Activated T-helper 1 cell treated with anti-CD3 and anti-CD28 coated beads, Interleukin-12 subunit alpha, Interleukin-12 subunit beta, Interleukin-2, Interleukin-4 antibody, amounts not matched to agents 30 ng/mL and 10 ng/mL and 1 ng/mL, durations not matched to agents 14 hours and 24 hours and 36 hours (primary cell): ENCODE measurements at regions of chr11 and their contacts with region 1.

Region 1: GRCh38 chr11:7098235-7098832 is 9.5 kb downstream of the RBMXL2 start:
- DNase-seq: no peak
- H3K4me3 Mint-ChIP-seq: no peak overlapping the region
- H3K27ac Mint-ChIP-seq: no peak overlapping the region
- H3K4me1 Mint-ChIP-seq: no peaks in the 10 kb centered on the region
- H3K27me3 Mint-ChIP-seq: peaks cover 16% of the 10 kb centered on the region

Region 2: GRCh38 chr11:7046474-7047175 is 51.7 kb before region 1 on chr11:
- intact Hi-C with region 1: no loop called
- DNase-seq: no peak
- H3K4me3 Mint-ChIP-seq: no peak overlapping the region
- H3K27ac Mint-ChIP-seq: no peak overlapping the region
- H3K4me1 Mint-ChIP-seq: no peaks in the 10 kb centered on the region
- H3K27me3 Mint-ChIP-seq: no peaks in the 10 kb centered on the region

Region 3: DNA sequence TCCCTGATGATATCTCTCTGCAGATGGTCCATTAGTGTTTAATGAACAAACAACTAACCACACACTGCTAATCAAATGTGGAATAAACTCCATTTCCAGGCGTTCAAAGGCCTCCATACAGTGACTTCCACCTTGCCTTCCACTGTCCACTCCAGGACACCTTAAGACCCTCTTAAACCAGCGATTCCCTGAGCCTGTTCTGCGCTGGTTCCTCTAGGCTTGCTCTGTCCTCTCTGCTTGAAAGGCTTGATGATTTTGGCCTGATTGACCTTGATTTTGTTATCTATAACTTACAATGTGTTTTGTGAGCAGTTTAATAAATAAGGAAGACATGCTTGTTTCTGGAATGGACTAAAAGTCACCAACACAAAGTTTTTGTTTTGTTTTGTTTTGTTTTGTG is 595.9 kb after region 1 on chr11:
- intact Hi-C with region 1: loop called (anchors 1 kb)
- DNase-seq: no peak
- H3K4me3 Mint-ChIP-seq: no peak overlapping the region
- H3K27ac Mint-ChIP-seq: no peak overlapping the region
- H3K4me1 Mint-ChIP-seq: no peaks in the 10 kb centered on the region
- H3K27me3 Mint-ChIP-seq: peaks cover 35% of the 10 kb centered on the region